Activated CD8-positive, alpha-beta T cell treated with anti-CD3 and anti-CD28 coated beads for 36 hours (primary cell): ENCODE measurements at regions of chr12 and their contacts with region 1.

Region 1: GRCh38 chr12:11015775-11016430 is 6.5 kb downstream of the TAS2R19 start:
- DNase-seq: no peak
- ATAC-seq: no peak
- H3K4me3 Mint-ChIP-seq: no peak overlapping the region
- H3K27ac Mint-ChIP-seq: no peak overlapping the region
- H3K4me1 Mint-ChIP-seq: peaks cover 6% of the 10 kb centered on the region
- H3K27me3 Mint-ChIP-seq: no peaks in the 10 kb centered on the region
- CTCF ChIP-seq: no peak

Region 2: GRCh38 chr12:10740182-10740581 is 275.7 kb before region 1 on chr12:
- CTCF ChIA-PET with region 1: no interaction called
- POLR2A ChIA-PET with region 1: no interaction called
- intact Hi-C with region 1: no loop called
- DNase-seq: no peak
- ATAC-seq: no peak
- H3K4me3 Mint-ChIP-seq: no peak overlapping the region
- H3K27ac Mint-ChIP-seq: no peak overlapping the region
- H3K4me1 Mint-ChIP-seq: peaks cover 5% of the 10 kb centered on the region
- H3K27me3 Mint-ChIP-seq: peaks cover 12% of the 10 kb centered on the region
- CTCF ChIP-seq: no peak

Region 3: DNA sequence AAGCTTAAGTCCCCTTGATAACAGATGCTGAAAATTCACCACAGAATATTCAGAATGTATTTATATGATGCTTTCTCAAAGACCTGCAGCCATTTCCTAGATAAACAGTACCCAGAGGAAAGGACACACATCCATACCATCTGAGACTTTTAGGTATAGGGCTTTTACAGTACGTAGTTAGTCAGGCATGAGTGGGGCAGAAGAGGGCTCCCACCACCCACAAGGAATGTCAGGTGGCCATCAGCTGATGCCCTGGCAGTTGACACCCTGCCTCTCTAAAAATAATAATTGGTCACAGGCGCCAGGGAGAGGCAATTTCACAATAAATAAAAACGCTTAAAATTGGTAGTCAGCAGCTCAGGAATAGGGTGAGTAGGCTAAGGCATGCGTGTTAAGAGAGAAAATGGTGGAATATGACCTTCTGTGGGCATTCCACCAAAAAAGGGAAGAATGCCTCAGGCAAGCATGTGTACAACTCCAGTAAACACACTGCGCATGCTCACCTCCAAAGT is 54.0 kb after region 1 on chr12:
- CTCF ChIA-PET with region 1: no interaction called
- POLR2A ChIA-PET with region 1: interaction called, 3 read pairs
- intact Hi-C with region 1: loop called (anchors 2 kb)
- DNase-seq: no peak
- ATAC-seq: no peak
- H3K4me3 Mint-ChIP-seq: no peak overlapping the region
- H3K27ac Mint-ChIP-seq: no peak overlapping the region
- H3K4me1 Mint-ChIP-seq: no peaks in the 10 kb centered on the region
- H3K27me3 Mint-ChIP-seq: no peaks in the 10 kb centered on the region
- CTCF ChIP-seq: no peak